AG04449 (cell line): ENCODE measurements at regions of chr22 and their contacts with region 1.

Region 1: GRCh38 chr22:30423982-30424963 is 1.3 kb upstream of the MTFP1 start:
- DNase-seq: peak; percentile 98
- H3K4me3 ChIP-seq: peak overlapping the region; percentile 69
- CTCF ChIP-seq: no peak

Region 2: DNA sequence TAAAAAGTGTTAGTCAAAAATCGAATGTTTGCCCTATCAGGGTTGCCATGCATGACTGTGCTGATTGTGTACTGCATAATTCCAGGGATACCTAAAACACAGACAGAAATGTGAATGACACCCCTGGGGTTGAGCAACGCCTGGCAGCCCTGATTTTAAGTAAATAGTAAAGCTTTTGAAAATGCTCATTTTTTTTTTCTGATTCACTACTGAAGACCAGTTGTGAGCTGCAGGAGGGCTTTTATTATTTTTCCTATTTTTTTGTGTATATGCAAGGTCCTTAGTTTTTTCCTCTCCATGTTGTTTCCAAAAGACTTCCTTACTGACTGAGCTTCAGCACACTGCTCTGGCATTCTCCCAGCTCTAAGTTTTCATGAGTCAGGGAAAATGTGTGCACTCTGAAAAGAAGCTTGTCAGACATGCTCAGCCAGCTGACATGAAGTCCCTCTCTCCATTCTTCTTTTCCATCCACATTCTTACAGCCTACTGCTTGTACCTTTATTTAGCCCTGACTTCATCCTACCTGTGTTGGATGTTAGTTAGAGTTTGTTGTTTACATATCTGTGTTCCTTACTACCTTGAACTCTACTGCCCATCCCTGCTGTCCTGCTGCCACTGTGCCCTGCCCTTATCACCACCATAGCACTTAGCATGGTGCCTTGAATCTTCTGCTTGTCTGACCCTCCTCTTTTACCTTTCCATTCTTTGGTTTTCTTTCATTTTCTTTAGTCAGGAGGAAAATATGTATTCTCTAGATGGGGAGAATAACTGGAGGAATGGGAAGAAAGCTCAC is 264.5 kb before region 1 on chr22:
- CTCF ChIA-PET with region 1: no interaction called
- POLR2A ChIA-PET with region 1: no interaction called
- DNase-seq: peak; percentile 56
- H3K4me3 ChIP-seq: no peak overlapping the region
- CTCF ChIP-seq: no peak

Region 3: DNA sequence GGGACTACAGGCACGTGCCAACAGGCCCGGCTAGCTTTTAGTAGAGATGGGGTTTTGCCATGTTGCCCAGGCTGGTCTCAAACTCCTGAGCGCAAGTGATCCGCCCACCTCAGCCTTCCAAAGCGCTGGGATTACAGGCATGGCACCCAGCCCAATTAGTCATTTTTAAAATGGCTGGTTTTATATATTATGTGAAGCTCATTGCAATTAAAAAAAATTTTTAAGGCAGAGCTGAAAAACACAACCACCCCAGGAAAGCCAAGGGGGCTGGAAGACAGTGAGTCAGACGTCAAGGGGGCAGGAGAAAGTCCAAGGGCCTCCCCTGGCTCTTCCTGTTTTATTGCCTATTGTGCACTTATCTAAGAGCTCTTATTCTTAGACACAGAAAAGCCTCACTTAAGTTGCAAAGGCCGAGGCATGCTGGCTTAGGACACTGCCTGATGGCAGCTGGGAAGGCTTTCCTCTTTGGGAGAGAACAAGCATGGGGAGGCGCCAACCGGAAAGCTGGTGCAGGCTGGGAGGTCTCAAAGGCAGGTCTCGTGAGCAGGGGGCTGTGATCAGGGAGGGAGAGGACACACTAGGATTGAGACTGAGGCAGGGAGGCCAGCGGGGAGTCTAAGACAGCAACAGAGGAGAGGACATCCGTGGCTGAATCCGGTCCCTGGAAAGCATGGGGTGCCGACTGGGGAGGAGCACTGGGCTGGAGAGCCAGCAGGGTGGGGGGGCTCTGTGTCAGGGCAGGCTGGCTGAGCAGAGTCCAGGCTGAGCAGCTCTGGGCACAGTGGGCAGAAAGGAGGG is 146.5 kb before region 1 on chr22:
- CTCF ChIA-PET with region 1: no interaction called
- POLR2A ChIA-PET with region 1: no interaction called
- DNase-seq: no peak
- H3K4me3 ChIP-seq: 0 out of 2 replicates have a peak overlapping the region, but pooled peaks have one; percentile 3
- CTCF ChIP-seq: no peak

Region 4: GRCh38 chr22:30396871-30397655 is 27.2 kb before region 1 on chr22 and contains the start of gene SEC14L2:
- CTCF ChIA-PET with region 1: interaction called, 129 read pairs
- POLR2A ChIA-PET with region 1: interaction called, 46 read pairs
- DNase-seq: no peak
- H3K4me3 ChIP-seq: peak within 1 kb of the TSS; percentile 85
- CTCF ChIP-seq: no peak

Region 5: GRCh38 chr22:30402028-30402765 is 22.1 kb before region 1 on chr22:
- CTCF ChIA-PET with region 1: interaction called, 48 read pairs
- POLR2A ChIA-PET with region 1: interaction called, 46 read pairs
- DNase-seq: no peak
- H3K4me3 ChIP-seq: no peak overlapping the region
- CTCF ChIP-seq: no peak

Region 6: DNA sequence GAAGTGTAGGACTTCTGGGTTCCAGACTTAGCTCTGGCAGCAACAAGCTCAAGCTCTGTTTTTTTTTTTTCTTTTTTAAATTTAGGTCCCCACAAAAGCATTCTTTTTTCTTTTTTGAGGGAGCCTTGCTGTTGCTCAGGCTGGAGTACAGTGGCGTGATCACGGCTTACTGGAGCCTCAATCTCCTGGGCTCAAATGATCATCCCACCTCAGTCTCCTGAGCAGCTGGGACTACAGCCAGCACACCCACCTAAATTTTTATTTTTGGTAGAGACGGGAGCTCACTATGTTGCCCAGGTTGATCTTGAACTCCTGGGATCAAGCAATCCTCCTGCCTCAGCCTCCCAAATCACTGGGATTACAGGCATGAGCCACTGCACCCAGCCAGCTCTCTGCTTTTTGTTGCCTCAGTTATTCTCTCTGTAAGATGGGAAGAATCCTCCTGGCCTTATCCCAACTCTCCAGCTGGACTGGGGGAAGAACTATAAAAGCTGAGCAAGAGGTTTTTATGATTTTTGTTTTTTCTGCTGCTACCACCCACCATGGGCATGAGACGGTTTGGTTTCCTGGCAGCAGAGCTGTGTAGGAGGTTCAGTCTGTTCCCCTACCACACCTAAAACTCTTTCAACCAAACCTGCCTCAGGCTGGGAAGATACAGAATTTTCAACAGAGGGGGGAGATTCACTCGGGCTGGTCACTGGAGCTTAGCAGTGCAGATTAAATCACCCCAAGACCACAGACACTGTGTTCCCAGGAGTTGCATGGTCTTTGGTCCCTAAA is 10.3 kb before region 1 on chr22:
- CTCF ChIA-PET with region 1: interaction called, 5 read pairs
- POLR2A ChIA-PET with region 1: interaction called, 19 read pairs
- DNase-seq: no peak
- H3K4me3 ChIP-seq: no peak overlapping the region
- CTCF ChIP-seq: no peak

Region 7: GRCh38 chr22:30435674-30436126 is 11.4 kb after region 1 on chr22:
- CTCF ChIA-PET with region 1: interaction called, 15 read pairs
- POLR2A ChIA-PET with region 1: interaction called, 4 read pairs
- DNase-seq: no peak
- H3K4me3 ChIP-seq: no peak overlapping the region
- CTCF ChIP-seq: no peak